Activated CD4-positive, alpha-beta T cell treated with anti-CD3 and anti-CD28 coated beads for 36 hours (primary cell): ENCODE measurements at regions of chr3 and their contacts with region 1.

Region 1: DNA sequence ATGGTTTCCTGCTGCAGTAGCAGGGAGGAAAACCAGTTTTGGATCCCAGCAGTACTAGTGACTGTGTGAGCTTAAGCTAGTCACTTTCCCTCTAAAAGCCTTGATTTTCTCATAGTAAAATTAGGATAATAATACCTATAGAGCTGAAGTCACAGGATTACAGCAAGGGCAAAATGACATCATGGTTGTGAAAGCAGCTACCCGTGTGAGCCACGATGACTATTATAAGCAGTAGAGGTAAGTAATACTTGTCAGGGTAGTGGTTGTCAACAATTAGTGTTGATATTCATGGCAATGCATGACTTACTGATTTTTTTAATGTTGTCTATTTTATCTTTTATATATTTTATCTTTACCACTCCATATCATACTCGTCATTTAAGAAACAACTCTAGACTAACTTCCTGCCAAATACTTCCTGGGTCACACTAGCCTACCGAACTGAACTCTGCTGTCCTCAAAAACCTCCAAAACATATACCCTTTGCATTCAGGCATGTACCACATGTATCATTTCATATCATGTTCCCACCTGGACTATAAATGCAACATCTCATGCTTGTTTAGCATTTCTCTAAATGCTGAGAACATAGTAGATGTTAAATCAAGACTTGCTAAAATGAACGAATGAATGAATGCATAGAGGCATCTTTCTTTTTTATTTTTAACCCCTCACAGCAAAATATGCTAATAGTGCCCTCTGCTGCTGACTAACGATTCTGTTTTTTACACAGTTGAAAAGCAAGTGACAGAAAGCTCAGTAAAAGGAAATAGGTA is 172.6 kb downstream of the P3H2 start:
- DNase-seq: peak; percentile 26
- ATAC-seq: peak; percentile 62
- H3K4me3 Mint-ChIP-seq: no peak overlapping the region
- H3K27ac Mint-ChIP-seq: peak overlapping the region; percentile 3
- H3K4me1 Mint-ChIP-seq: peaks cover 18% of the 10 kb centered on the region
- H3K27me3 Mint-ChIP-seq: no peaks in the 10 kb centered on the region

Region 2: GRCh38 chr3:188954590-188955208 is 993.4 kb before region 1 on chr3:
- CTCF ChIA-PET with region 1: no interaction called
- POLR2A ChIA-PET with region 1: no interaction called
- intact Hi-C with region 1: no loop called
- DNase-seq: peak; percentile 90
- ATAC-seq: peak; percentile 61
- H3K4me3 Mint-ChIP-seq: no peak overlapping the region
- H3K27ac Mint-ChIP-seq: no peak overlapping the region
- H3K4me1 Mint-ChIP-seq: peaks cover 46% of the 10 kb centered on the region
- H3K27me3 Mint-ChIP-seq: no peaks in the 10 kb centered on the region

Region 3: GRCh38 chr3:189148081-189148507 is 800.0 kb before region 1 on chr3:
- CTCF ChIA-PET with region 1: interaction called, 4 read pairs
- POLR2A ChIA-PET with region 1: no interaction called
- intact Hi-C with region 1: loop called in 1 of 2 experiments (anchors 5 kb)
- DNase-seq: peak; percentile 81
- ATAC-seq: peak; percentile 66
- H3K4me3 Mint-ChIP-seq: no peak overlapping the region
- H3K27ac Mint-ChIP-seq: no peak overlapping the region
- H3K4me1 Mint-ChIP-seq: peaks cover 17% of the 10 kb centered on the region
- H3K27me3 Mint-ChIP-seq: peaks cover 3% of the 10 kb centered on the region

Region 4: DNA sequence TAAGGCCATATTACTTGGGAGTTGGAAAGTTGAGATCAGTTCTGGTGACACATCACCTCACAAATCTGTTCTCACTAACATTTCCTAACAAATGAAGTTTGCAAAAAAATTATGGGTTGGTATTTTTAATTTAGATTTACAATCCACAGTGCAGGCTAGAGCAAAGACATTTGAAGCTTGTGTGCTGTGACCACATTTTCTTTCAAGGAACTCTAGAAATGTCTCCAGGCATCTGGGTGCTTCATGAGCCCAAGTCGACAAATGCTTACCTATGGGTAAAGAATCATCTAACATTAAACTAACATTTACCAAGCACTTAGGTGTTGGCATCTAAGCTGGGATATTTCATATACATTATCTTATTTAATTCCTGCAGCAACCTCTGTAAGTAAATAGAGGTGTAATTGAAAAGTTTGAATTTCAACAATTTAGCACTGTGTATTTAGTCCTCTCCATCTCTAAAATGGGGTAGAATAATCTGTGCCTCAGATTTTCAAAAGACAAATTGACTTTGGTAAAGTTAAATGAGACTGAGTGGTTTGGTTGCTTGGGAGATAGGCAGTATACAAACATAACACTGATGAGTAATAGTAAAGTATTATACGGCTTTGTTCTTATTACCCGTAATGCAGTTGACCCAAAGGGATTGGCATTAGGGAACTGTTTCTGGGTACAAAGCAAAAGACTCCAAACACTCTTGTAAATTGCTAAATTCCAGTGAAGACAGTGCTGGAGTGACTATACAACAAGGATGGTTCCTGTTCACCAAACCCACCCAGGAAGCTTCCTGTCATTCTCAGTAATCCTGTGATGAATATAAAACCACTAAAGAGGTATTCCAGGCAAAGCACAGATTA is 613.8 kb before region 1 on chr3:
- CTCF ChIA-PET with region 1: interaction called, 3 read pairs
- POLR2A ChIA-PET with region 1: no interaction called
- intact Hi-C with region 1: loop called in 1 of 2 experiments (anchors 5 kb)
- DNase-seq: no peak
- ATAC-seq: peak; percentile 19
- H3K4me3 Mint-ChIP-seq: no peak overlapping the region
- H3K27ac Mint-ChIP-seq: no peak overlapping the region
- H3K4me1 Mint-ChIP-seq: peaks cover 42% of the 10 kb centered on the region
- H3K27me3 Mint-ChIP-seq: no peaks in the 10 kb centered on the region

Region 5: DNA sequence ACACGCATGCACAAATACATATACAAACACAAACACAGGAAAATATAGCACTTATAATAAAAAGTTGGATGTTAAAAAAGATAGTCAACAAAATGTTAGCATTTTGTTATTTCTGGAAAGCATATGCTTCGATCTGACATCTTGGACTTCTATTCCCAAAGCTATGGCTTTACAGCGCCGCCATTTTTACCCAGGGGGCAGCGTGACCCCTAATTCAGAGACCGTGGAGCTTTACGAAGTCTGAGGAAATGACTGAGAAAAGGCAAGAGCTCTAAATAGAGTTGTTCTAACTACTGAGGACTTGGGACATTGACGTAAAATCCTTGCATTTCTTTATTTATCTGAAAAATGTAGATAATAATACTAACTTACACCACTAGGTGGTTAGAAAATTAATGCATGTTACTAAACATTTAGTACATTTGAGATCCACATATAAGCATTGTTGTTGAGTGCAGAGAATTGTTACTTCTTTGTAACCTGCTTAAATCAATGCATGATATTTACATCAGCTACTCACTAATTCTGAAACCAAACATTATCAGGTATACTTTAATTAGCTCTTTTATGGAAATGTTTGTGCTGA is 161.6 kb before region 1 on chr3:
- CTCF ChIA-PET with region 1: no interaction called
- POLR2A ChIA-PET with region 1: no interaction called
- intact Hi-C with region 1: loop called in 1 of 2 experiments (anchors 5 kb)
- DNase-seq: no peak
- ATAC-seq: no peak
- H3K4me3 Mint-ChIP-seq: no peak overlapping the region
- H3K27ac Mint-ChIP-seq: no peak overlapping the region
- H3K4me1 Mint-ChIP-seq: peaks cover 9% of the 10 kb centered on the region
- H3K27me3 Mint-ChIP-seq: no peaks in the 10 kb centered on the region

Region 6: GRCh38 chr3:189961525-189962161 is 13.5 kb after region 1 on chr3:
- CTCF ChIA-PET with region 1: interaction called, 15 read pairs
- POLR2A ChIA-PET with region 1: interaction called, 5 read pairs
- intact Hi-C with region 1: no loop called
- DNase-seq: peak; percentile 85
- ATAC-seq: peak; percentile 78
- H3K4me3 Mint-ChIP-seq: no peak overlapping the region
- H3K27ac Mint-ChIP-seq: no peak overlapping the region
- H3K4me1 Mint-ChIP-seq: peaks cover 8% of the 10 kb centered on the region
- H3K27me3 Mint-ChIP-seq: peaks cover 7% of the 10 kb centered on the region

Region 7: DNA sequence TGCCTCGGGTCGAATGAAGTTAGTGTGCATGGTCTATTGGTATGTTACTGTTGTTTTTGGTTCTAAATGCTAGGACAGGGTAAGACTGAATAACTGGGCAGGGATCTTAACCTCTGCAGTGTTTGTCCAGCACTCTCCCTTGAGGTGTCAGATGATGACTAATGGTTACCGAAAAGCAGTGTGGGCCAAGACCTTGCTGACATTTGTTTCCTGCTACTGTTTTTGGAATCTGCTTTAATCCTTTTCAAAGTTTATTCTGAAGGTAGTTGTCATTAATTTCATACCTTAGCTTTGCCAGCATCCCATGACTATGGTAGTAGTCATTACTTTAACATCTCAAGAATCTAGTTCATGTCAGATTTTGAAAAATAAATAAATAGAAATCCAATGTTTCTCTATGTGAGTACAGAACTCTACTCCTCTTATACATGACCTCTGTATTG is 55.6 kb after region 1 on chr3:
- CTCF ChIA-PET with region 1: no interaction called
- POLR2A ChIA-PET with region 1: no interaction called
- intact Hi-C with region 1: no loop called
- DNase-seq: no peak
- ATAC-seq: no peak
- H3K4me3 Mint-ChIP-seq: no peak overlapping the region
- H3K27ac Mint-ChIP-seq: no peak overlapping the region
- H3K4me1 Mint-ChIP-seq: no peaks in the 10 kb centered on the region
- H3K27me3 Mint-ChIP-seq: peaks cover 8% of the 10 kb centered on the region